HepG2 (cell line): ENCODE measurements at regions of chr12 and their contacts with region 1.

Region 1: GRCh38 chr12:143964-144649 is 69.8 kb downstream of the SLC6A12 start:
- DNase-seq: peak; percentile 62
- ATAC-seq: peak; percentile 79
- H3K4me3 ChIP-seq: peak overlapping the region; percentile 20 to 62 (median 45); a peak in 5 of 6 replicates
- H3K27ac ChIP-seq: peak overlapping the region; percentile 10
- H3K4me1 ChIP-seq: peaks cover 43% of the 10 kb centered on the region
- H3K27me3 ChIP-seq: peaks cover 0 to 32% of the 10 kb centered on the region in 2 experiments; a peak in 3 of 5 replicates
- CTCF ChIP-seq: peak; percentile 29; the same call in 1 of the 2 replicates
- EP300 ChIP-seq: no peak
- POLR2A ChIP-seq: no peak
- RAD21 ChIP-seq: no peak

Region 2: DNA sequence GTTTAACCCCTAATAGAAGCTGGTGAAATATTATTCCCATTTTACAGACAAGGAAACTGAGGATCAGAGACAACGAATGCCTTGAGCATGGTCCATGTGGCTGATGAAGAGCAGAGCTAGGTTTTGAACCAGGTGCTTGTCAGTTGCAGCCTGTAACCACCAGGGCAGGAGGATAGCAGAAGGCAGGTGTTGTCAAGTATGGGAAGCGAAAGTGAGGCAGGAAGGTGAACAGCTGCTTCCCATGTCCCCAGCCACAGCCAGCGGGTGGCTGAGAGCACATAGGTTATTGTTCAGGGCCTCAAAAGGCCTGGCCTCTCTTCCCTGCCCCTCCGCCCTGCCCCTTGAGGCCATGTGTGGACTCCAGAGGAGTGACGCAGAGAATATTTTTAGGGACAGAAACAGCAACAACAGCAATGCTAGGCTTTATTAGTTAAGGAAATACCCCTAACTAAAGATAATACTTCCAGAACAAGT is 38.0 kb before region 1 on chr12:
- CTCF ChIA-PET with region 1: no interaction called
- POLR2A ChIA-PET with region 1: no interaction called
- in situ Hi-C with region 1: no loop called
- intact Hi-C with region 1: loop called (anchors 1 kb)
- DNase-seq: peak; percentile 17
- ATAC-seq: peak; percentile 49
- H3K4me3 ChIP-seq: no peak overlapping the region
- H3K27ac ChIP-seq: no peak overlapping the region
- H3K4me1 ChIP-seq: peaks cover 13% of the 10 kb centered on the region
- H3K27me3 ChIP-seq: peaks cover 4 to 41% of the 10 kb centered on the region in 2 experiments
- CTCF ChIP-seq: 0 out of 2 replicates have a peak, but pooled peaks have one; percentile 8
- EP300 ChIP-seq: no peak
- POLR2A ChIP-seq: no peak
- RAD21 ChIP-seq: no peak

Region 3: GRCh38 chr12:162467-163307 is 18.6 kb after region 1 on chr12:
- CTCF ChIA-PET with region 1: no interaction called
- POLR2A ChIA-PET with region 1: no interaction called
- in situ Hi-C with region 1: no loop called
- intact Hi-C with region 1: no loop called
- DNase-seq: no peak
- ATAC-seq: peak; percentile 34
- H3K4me3 ChIP-seq: no peak overlapping the region
- H3K27ac ChIP-seq: no peak overlapping the region
- H3K4me1 ChIP-seq: peaks cover 29% of the 10 kb centered on the region
- H3K27me3 ChIP-seq: peaks cover 0 to 58% of the 10 kb centered on the region in 2 experiments; a peak in 4 of 5 replicates
- CTCF ChIP-seq: no peak
- EP300 ChIP-seq: no peak
- POLR2A ChIP-seq: no peak
- RAD21 ChIP-seq: no peak

Region 4: GRCh38 chr12:304805-305204 is 160.7 kb after region 1 on chr12:
- CTCF ChIA-PET with region 1: no interaction called
- POLR2A ChIA-PET with region 1: no interaction called
- in situ Hi-C with region 1: no loop called
- intact Hi-C with region 1: no loop called
- DNase-seq: no peak
- ATAC-seq: no peak
- H3K4me3 ChIP-seq: no peak overlapping the region
- H3K27ac ChIP-seq: no peak overlapping the region
- H3K4me1 ChIP-seq: no peaks in the 10 kb centered on the region
- H3K27me3 ChIP-seq: no peaks in the 10 kb centered on the region
- CTCF ChIP-seq: no peak
- EP300 ChIP-seq: no peak
- POLR2A ChIP-seq: no peak
- RAD21 ChIP-seq: no peak